Activated B cell treated with CpG ODN at 0.5 μM for 24 hours (primary cell): ENCODE measurements at regions of chr4 and their contacts with region 1.

Region 1: GRCh38 chr4:85658766-85659439 is 184.0 kb downstream of the ARHGAP24 start:
- DNase-seq: no peak
- ATAC-seq: no peak
- H3K4me3 Mint-ChIP-seq: peak overlapping the region; percentile 5
- H3K27ac Mint-ChIP-seq: peak overlapping the region; percentile 89
- H3K4me1 Mint-ChIP-seq: peaks cover 52% of the 10 kb centered on the region
- H3K27me3 Mint-ChIP-seq: no peaks in the 10 kb centered on the region
- CTCF ChIP-seq: no peak

Region 2: GRCh38 chr4:85147439-85148076 is 511.3 kb before region 1 on chr4:
- CTCF ChIA-PET with region 1: no interaction called
- POLR2A ChIA-PET with region 1: no interaction called
- intact Hi-C with region 1: loop called (anchors 5 kb)
- DNase-seq: no peak
- ATAC-seq: peak; percentile 86
- H3K4me3 Mint-ChIP-seq: no peak overlapping the region
- H3K27ac Mint-ChIP-seq: no peak overlapping the region
- H3K4me1 Mint-ChIP-seq: peaks cover 5% of the 10 kb centered on the region
- H3K27me3 Mint-ChIP-seq: no peaks in the 10 kb centered on the region
- CTCF ChIP-seq: peak; percentile 40

Region 3: GRCh38 chr4:85642356-85643100 is 16.4 kb before region 1 on chr4:
- CTCF ChIA-PET with region 1: interaction called, 3 read pairs
- POLR2A ChIA-PET with region 1: no interaction called
- intact Hi-C with region 1: loop called (anchors 2 kb)
- DNase-seq: no peak
- ATAC-seq: peak; percentile 49
- H3K4me3 Mint-ChIP-seq: no peak overlapping the region
- H3K27ac Mint-ChIP-seq: peak overlapping the region; percentile 61
- H3K4me1 Mint-ChIP-seq: peaks cover 32% of the 10 kb centered on the region
- H3K27me3 Mint-ChIP-seq: no peaks in the 10 kb centered on the region
- CTCF ChIP-seq: no peak

Region 4: DNA sequence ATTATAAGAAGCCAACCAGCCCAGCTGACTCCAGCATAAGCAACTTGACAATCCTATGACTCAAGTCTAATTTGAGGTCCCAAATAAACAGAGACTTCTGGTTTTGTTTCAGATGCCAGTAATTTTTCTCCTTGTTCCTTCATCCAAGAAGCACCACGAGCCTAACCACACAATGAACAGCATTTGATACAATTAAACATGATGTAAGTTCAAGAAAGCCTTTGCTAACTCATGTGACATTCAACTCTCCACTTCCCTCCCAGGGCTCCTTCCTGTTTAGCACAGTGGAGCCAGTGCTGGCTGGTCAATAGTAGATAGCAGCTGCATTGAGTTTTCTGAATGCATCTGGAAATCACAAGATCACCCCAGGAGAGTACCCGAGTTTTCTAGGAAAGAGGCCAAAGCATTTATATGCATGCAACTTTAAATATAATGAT is 22.3 kb after region 1 on chr4:
- CTCF ChIA-PET with region 1: interaction called, 4 read pairs
- POLR2A ChIA-PET with region 1: no interaction called
- intact Hi-C with region 1: loop called (anchors 2 kb)
- DNase-seq: no peak
- ATAC-seq: peak; percentile 65
- H3K4me3 Mint-ChIP-seq: no peak overlapping the region
- H3K27ac Mint-ChIP-seq: peak overlapping the region; percentile 74
- H3K4me1 Mint-ChIP-seq: peaks cover 57% of the 10 kb centered on the region
- H3K27me3 Mint-ChIP-seq: no peaks in the 10 kb centered on the region
- CTCF ChIP-seq: no peak

Region 5: GRCh38 chr4:85734424-85734831 is 75.5 kb after region 1 on chr4:
- CTCF ChIA-PET with region 1: interaction called, 3 read pairs
- POLR2A ChIA-PET with region 1: interaction called, 6 read pairs
- intact Hi-C with region 1: loop called (anchors 2 kb)
- DNase-seq: no peak
- ATAC-seq: peak; percentile 56
- H3K4me3 Mint-ChIP-seq: peak overlapping the region; percentile 52
- H3K27ac Mint-ChIP-seq: peak overlapping the region; percentile 83
- H3K4me1 Mint-ChIP-seq: peaks cover 82% of the 10 kb centered on the region
- H3K27me3 Mint-ChIP-seq: no peaks in the 10 kb centered on the region
- CTCF ChIP-seq: no peak

Region 6: GRCh38 chr4:85889314-85889713 is 230.4 kb after region 1 on chr4:
- CTCF ChIA-PET with region 1: no interaction called
- POLR2A ChIA-PET with region 1: no interaction called
- intact Hi-C with region 1: no loop called
- DNase-seq: no peak
- ATAC-seq: no peak
- H3K4me3 Mint-ChIP-seq: no peak overlapping the region
- H3K27ac Mint-ChIP-seq: no peak overlapping the region
- H3K4me1 Mint-ChIP-seq: peaks cover 23% of the 10 kb centered on the region
- H3K27me3 Mint-ChIP-seq: no peaks in the 10 kb centered on the region
- CTCF ChIP-seq: no peak

Region 7: DNA sequence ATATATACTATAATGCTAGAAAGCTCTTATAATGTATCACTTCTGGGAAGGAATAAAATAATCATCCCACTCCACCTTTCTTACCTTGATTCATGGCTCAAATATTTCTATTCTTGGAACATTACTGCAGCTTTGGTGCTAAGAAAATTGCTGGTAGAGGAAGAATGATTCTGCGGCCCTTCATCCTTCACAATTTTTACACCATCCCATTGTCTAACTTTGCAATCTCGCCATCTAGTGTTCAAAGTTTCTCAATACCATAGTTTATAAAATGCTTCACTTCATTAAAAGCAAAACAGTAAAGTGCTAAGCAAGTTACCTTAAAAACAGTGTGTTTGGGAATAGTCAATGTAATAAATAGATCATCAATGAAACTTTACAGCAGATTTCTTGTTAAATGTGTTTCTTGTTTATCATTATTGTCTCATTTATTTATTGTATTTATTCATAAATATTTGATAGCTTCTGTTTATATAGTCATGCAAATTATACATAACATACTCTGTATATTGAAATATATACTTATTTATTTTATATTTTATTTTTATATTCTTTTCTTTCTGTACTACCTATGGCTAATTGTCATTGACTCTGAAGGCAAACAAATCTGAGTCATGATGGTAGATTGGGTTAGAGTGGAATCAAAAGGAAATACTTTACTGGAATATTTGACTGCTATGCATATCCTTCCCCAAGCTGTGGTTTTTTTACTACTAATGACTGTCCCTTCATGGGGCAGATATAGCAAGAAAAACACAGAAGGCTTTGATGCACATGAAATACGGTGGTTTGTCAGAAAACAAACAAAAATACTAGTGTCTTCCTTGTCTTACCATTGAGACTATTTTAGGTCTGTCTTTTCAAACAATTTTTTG is 310.3 kb after region 1 on chr4:
- CTCF ChIA-PET with region 1: no interaction called
- POLR2A ChIA-PET with region 1: no interaction called
- intact Hi-C with region 1: no loop called
- DNase-seq: no peak
- ATAC-seq: no peak
- H3K4me3 Mint-ChIP-seq: no peak overlapping the region
- H3K27ac Mint-ChIP-seq: no peak overlapping the region
- H3K4me1 Mint-ChIP-seq: peaks cover 10% of the 10 kb centered on the region
- H3K27me3 Mint-ChIP-seq: no peaks in the 10 kb centered on the region
- CTCF ChIP-seq: no peak